Transverse colon (tissue), 4 donors: ENCODE measurements at regions of chr7 and their contacts with region 1.

Region 1: DNA sequence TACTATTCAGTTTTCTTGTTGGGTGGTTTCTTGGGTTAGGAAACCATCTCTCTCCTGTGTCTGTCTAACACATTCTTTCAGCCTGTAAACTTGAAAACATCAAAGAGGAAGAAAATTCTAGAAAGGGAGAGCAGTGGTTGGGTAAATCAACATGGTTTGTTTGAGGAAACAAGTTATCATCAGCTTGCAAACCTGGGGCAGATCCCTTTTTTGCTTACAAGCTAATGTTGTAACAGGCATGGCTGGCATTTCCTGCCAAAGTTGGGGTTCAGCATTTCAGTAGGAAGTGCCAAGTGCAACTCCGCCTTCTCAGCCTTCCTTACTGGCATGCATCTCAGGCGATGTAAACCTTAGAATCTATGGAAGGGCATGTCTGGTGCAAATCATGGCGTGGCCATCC is 112.6 kb downstream of the EEPD1 start:
- DNase-seq: no peak
- H3K4me3 ChIP-seq: no peak overlapping the region
- H3K27ac ChIP-seq: peak overlapping the region; percentile 73 to 84 (median 78)
- H3K4me1 ChIP-seq: peaks cover 45 to 57% (median 50%) of the 10 kb centered on the region in 4 donors
- H3K27me3 ChIP-seq: no peaks in the 10 kb centered on the region
- CTCF ChIP-seq: no peak
- EP300 ChIP-seq: no peak
- POLR2A ChIP-seq: no peak

Region 2: GRCh38 chr7:36109013-36109627 is 156.6 kb before region 1 on chr7:
- in situ Hi-C with region 1: no loop called
- intact Hi-C with region 1: no loop called
- DNase-seq: no peak
- H3K4me3 ChIP-seq: no peak overlapping the region
- H3K27ac ChIP-seq: no peak overlapping the region
- H3K4me1 ChIP-seq: no peaks in the 10 kb centered on the region
- H3K27me3 ChIP-seq: no peaks in the 10 kb centered on the region
- CTCF ChIP-seq: no peak
- EP300 ChIP-seq: no peak
- POLR2A ChIP-seq: no peak

Region 3: DNA sequence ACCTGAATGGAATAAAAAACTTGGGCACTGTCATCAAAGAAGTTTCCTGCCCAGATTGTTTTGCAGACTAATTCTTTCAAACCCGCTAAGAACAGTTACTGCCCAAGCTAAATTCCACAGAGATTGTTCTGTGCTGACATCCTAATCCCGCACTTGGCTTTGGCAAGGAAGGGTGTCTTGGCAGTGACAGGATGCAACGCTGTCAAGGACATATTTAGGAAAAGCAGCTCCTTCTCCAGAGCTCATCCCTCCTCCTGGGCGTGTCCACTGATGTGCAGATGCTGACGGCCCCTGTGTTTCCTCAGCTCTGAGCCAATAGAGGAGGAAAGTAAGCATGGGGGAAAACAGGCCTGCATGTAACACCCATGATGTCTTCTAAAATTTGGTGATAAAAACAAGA is 38.5 kb before region 1 on chr7:
- in situ Hi-C with region 1: no loop called
- intact Hi-C with region 1: loop called (anchors 5 kb)
- DNase-seq: peak; percentile 54
- H3K4me3 ChIP-seq: no peak overlapping the region
- H3K27ac ChIP-seq: peak overlapping the region in 2 of 4 donors; percentile 57 to 79
- H3K4me1 ChIP-seq: peaks cover 7 to 45% (median 17%) of the 10 kb centered on the region in 4 donors
- H3K27me3 ChIP-seq: no peaks in the 10 kb centered on the region
- CTCF ChIP-seq: no peak
- EP300 ChIP-seq: no peak
- POLR2A ChIP-seq: no peak

Region 4: GRCh38 chr7:36994456-36995112 is 728.9 kb after region 1 on chr7:
- in situ Hi-C with region 1: no loop called
- intact Hi-C with region 1: no loop called
- DNase-seq: no peak
- H3K4me3 ChIP-seq: no peak overlapping the region
- H3K27ac ChIP-seq: no peak overlapping the region
- H3K4me1 ChIP-seq: no peaks in the 10 kb centered on the region
- H3K27me3 ChIP-seq: no peaks in the 10 kb centered on the region
- CTCF ChIP-seq: no peak
- EP300 ChIP-seq: no peak
- POLR2A ChIP-seq: no peak

Region 5: GRCh38 chr7:37092548-37092947 is 826.9 kb after region 1 on chr7:
- in situ Hi-C with region 1: no loop called
- intact Hi-C with region 1: no loop called
- DNase-seq: no peak
- H3K4me3 ChIP-seq: no peak overlapping the region
- H3K27ac ChIP-seq: no peak overlapping the region
- H3K4me1 ChIP-seq: no peaks in the 10 kb centered on the region
- H3K27me3 ChIP-seq: no peaks in the 10 kb centered on the region
- CTCF ChIP-seq: no peak
- EP300 ChIP-seq: no peak
- POLR2A ChIP-seq: no peak